ENCODE measurements at regions of chr7 and their contacts with region 1.

Region 1: DNA sequence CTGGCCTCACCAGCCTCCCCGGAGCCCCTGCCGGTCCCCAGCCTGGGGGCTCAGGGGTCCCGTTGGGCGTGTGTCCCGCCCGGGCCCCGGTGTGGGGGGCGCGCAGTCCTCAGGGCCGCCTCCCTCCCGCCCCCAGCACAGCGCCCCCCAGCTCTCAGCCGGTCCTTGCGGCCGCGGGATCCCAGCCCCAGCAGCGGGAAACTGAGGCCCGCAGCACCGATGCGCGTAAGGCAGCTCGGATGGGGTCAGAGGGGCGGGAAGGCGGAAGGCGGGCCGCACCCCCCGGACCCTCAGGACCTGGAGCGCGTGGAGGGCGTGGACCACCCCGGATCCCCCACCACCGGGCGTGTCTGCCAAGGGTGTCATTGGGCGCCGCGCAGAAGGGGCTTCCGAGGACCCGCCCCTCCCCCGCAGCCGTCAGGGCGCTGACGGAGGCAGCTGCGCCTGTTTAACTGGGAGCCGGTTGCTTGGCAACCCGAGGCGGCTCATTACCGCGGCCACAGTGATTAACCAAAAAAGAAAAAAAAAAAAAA is 14.9 kb downstream of the UNCX start:
- DNase-seq: no peak

Region 2: GRCh38 chr7:1193593-1194424 is 53.8 kb before region 1 on chr7:
- intact Hi-C with region 1: no loop called
- DNase-seq: no peak

Region 3: DNA sequence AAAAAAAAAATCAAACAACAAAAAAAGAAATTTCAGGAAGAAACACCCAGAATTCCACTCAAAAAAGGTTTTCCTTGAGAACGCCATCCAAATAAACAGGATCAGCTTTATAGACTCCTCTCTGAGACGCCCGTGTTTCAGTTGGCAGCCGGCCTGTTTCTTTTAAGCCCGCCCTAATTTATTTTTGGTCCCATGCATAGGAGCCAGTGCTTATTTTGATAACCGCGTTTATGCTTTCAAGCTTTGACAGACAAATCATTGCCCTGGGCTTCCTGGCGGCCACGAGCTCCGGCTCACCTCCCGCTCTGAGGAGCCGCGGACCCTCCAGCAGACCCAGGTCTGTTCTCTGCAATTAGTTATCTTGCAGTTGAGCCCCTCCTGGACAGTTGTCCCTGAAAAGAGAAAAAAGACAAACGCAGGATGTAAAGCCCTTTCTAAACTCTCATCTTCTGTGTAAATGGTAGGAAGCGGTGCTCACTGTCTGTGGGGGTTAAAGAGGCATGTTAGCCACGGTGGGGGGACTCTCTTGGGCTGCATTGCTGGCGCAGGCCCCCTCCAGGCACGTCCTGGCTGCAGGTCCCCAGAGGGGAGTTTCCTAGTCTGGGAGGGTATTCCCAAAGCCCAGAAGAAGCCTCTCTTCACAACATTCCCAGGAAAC is 37.1 kb before region 1 on chr7:
- intact Hi-C with region 1: no loop called
- DNase-seq: no peak

Region 4: DNA sequence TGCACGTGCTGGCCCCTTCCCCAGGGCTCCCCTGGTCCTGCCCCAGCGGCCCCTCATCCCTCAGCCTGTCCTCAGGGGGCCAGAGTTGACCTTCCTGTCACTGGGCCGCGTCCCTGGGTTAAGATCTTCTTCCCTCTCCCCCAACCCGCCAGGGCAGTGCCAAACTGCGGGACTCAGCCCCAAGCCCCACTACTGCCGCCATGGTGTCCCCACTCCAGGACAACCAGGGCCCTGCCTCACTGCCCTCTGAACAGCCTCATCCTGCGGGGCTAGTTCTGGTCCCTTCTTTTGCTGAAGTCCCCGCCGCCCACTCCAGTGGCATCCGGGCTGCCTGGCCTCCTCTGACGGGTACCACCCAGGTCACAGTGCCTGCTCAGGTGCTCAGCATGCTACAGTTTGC is 22.6 kb after region 1 on chr7:
- intact Hi-C with region 1: loop called in 1 of 2 experiments (anchors 1 kb)
- DNase-seq: no peak

Region 5: GRCh38 chr7:1397491-1398327 is 150.1 kb after region 1 on chr7:
- intact Hi-C with region 1: loop called in 1 of 2 experiments (anchors 10 kb)
- DNase-seq: no peak

Measured in posterior vena cava (tissue), 2 donors.